ENCODE measurements at regions of chr9 and their contacts with region 1.

Region 1: GRCh38 chr9:69056191-69056815 is 20.8 kb downstream of the FXN start:
- DNase-seq: no peak
- ATAC-seq: no peak
- H3K4me3 ChIP-seq: no peak overlapping the region
- H3K27ac ChIP-seq: no peak overlapping the region
- H3K4me1 ChIP-seq: no peaks in the 10 kb centered on the region
- H3K27me3 ChIP-seq: no peaks in the 10 kb centered on the region

Region 2: DNA sequence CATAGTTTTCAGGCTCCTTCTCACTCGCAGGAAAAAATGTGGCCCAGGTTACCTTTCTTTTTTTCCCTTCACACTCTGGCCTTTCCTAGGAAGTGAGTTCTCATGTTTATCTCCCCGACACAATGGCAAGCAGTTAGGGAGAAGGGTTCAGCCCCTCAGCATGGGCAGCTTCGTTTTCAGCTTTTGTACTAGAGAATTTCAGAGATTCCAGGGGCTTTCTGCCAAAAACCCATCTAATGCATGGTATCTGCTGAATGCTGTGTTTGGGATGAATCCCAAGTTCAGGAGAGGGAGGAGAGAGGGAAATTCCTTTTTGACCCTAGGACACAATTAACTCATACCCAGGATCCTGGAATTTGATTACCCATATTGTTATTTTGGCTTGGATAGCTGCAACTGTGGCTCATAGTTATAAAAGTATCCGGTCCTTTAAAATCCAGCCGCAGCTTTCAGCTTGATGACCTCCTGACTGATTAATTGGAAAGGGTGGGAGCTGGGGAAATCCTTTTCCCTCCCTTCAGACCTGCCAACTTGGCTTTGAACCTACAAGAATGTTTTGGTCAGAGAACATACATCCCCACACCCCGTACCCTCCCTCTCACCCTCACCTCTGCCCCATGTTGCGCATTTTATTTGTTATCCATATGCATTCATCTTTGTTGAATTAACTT is 594.1 kb before region 1 on chr9:
- intact Hi-C with region 1: no loop called
- DNase-seq: peak in 1 of 3 donors; percentile 17
- ATAC-seq: peak; percentile 79 to 88
- H3K4me3 ChIP-seq: no peak overlapping the region
- H3K27ac ChIP-seq: peak overlapping the region; percentile 11
- H3K4me1 ChIP-seq: peaks cover 9% of the 10 kb centered on the region
- H3K27me3 ChIP-seq: no peaks in the 10 kb centered on the region

Region 3: GRCh38 chr9:68492806-68493205 is 563.5 kb before region 1 on chr9:
- intact Hi-C with region 1: no loop called
- DNase-seq: no peak
- ATAC-seq: no peak
- H3K4me3 ChIP-seq: no peak overlapping the region
- H3K27ac ChIP-seq: no peak overlapping the region
- H3K4me1 ChIP-seq: peaks cover 15% of the 10 kb centered on the region
- H3K27me3 ChIP-seq: no peaks in the 10 kb centered on the region

Region 4: GRCh38 chr9:69131682-69132081 is 75.4 kb after region 1 on chr9:
- intact Hi-C with region 1: loop called in 1 of 4 experiments (anchors 10 kb)
- DNase-seq: no peak
- ATAC-seq: peak; percentile 75 to 87
- H3K4me3 ChIP-seq: no peak overlapping the region
- H3K27ac ChIP-seq: no peak overlapping the region
- H3K4me1 ChIP-seq: peaks cover 15% of the 10 kb centered on the region
- H3K27me3 ChIP-seq: no peaks in the 10 kb centered on the region

Region 5: DNA sequence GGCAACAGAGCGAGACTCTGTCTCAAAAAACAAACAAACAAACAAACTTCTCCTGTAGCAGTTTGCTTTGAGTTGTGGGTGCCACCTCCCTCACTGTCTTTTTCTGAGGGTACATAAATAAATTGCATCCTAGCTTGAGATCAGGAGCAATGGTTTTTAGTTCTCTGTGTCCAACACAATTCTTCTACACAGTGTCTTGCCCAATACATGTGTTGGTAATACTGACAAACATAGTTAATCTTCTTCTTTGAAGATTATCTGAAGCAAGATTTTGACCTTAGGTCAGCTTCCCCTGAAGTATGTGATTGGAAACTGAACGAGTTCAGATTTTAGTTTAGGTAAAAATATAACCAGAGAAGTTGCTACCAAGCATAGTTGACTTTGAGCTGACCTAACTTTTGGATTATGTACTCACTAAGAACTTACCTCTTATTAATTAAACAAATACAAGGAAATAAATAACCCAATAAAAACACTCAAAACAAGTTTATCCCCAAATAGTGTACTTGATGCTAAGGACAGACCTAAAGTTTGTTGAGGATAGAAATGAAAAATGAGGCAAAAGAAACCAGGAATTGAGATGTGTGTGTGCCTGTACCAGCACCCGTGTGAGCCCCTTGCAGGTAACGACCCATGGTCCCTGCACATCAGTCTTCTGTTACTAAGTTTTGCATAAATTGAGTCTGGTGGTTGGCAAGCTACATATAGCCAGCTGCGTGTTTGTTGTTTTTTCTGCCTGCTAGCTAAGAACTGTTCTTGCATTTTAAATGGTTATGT is 134.0 kb after region 1 on chr9:
- intact Hi-C with region 1: loop called (anchors 2 to 5 kb)
- DNase-seq: no peak
- ATAC-seq: no peak
- H3K4me3 ChIP-seq: no peak overlapping the region
- H3K27ac ChIP-seq: no peak overlapping the region
- H3K4me1 ChIP-seq: peaks cover 5% of the 10 kb centered on the region
- H3K27me3 ChIP-seq: no peaks in the 10 kb centered on the region

Region 6: DNA sequence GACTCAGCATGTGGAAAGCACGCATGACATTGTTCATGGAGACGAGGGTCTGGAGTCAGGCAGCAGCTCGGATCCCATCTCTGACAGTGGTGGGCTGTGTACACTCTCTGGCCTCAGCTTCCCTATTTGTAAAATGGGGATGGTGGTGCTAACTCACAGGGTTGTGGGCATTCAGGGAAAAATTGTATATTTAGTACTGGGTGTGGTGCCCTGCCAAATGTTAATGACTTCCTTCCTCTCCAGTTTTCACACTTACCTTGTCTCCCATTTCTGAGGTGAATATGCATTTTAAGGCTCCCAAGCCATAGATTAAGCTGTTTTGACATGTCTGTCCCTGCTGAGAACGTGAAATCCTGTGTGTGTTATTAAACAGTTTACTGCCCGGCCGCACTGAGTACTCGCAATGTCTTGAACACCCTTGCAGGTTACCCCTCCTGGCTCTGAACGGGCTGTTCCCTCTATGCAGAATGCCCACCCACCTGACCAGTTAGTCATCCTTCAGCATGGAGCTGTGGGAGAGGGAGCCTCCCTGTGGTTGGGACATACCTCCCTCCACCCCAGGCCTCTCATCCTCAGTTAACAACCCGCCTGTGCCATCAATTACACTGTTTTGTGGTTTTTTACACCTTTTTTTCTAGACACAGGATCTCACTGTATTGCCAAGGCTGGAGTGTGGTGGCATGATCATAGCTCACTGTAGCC is 143.6 kb after region 1 on chr9:
- intact Hi-C with region 1: loop called in 1 of 4 experiments (anchors 5 kb)
- DNase-seq: no peak
- ATAC-seq: peak; percentile 27 to 47
- H3K4me3 ChIP-seq: no peak overlapping the region
- H3K27ac ChIP-seq: no peak overlapping the region
- H3K4me1 ChIP-seq: peaks cover 13% of the 10 kb centered on the region
- H3K27me3 ChIP-seq: no peaks in the 10 kb centered on the region

Region 7: DNA sequence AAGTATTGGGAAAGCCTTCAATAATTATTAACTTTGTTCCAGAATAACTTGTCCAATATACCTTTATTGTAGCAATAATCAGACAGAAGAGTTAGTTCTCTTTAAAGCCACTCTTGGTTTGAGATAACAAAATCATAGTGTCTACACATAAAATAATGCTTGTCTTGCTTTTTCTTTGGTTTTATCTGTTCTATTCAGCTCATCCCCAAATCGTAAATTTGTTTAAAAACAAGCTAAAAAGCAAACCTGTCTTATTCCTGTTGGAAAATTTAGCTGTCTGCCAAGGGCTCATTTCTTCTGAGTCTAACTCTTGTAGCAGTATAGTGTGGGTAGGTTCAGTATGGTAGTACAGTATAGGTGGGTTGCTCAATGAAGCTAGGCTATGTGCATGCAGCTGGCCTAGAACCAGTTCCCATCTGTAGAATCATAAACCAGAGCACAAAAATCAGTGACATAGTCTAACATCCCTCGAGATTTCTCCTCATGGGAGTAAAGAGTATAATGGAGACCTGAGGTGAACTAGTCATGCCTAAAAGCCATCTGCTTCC is 633.8 kb after region 1 on chr9:
- intact Hi-C with region 1: no loop called
- DNase-seq: no peak
- ATAC-seq: no peak
- H3K4me3 ChIP-seq: no peak overlapping the region
- H3K27ac ChIP-seq: no peak overlapping the region
- H3K4me1 ChIP-seq: no peaks in the 10 kb centered on the region
- H3K27me3 ChIP-seq: no peaks in the 10 kb centered on the region

Measured in right cardiac atrium (tissue), 5 donors.